Endothelial cell of umbilical vein (primary cell): ENCODE measurements at regions of chr17 and their contacts with region 1.

Region 1: DNA sequence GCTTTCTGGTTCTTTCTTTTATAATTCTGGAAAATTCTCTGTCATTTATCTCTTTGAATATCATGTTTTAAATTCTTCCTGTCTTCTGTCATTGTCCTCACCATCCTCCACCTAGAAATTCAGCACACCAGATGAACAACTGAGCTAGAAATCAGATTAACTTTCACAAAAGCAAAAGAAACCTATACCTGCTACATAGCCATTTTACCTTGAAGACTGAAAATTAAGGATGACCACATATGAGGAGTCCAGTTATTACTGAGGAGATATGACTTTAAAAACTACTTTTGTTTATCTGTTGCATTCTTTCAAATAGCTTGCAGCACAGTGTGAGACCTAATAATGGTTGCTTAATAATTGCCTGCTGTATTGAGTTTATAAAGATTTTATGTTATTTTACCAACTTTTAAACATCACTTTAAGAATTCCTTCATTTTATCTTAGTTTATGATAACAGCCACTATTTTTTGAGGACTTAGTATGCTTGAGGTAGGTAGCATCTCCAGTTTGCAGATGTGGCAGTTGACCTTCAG is 104.3 kb downstream of the BCAS3 start:
- DNase-seq: no peak
- H3K4me3 ChIP-seq: no peak overlapping the region
- H3K27ac ChIP-seq: no peak overlapping the region
- H3K4me1 ChIP-seq: no peaks in the 10 kb centered on the region
- H3K27me3 ChIP-seq: no peaks in the 10 kb centered on the region
- CTCF ChIP-seq: no peak
- POLR2A ChIP-seq: no peak

Region 2: GRCh38 chr17:60817192-60817591 is 35.2 kb after region 1 on chr17:
- CTCF ChIA-PET with region 1: no interaction called
- POLR2A ChIA-PET with region 1: no interaction called
- dilution Hi-C with region 1: no loop called
- intact Hi-C with region 1: no loop called
- DNase-seq: no peak
- H3K4me3 ChIP-seq: no peak overlapping the region
- H3K27ac ChIP-seq: no peak overlapping the region
- H3K4me1 ChIP-seq: no peaks in the 10 kb centered on the region
- H3K27me3 ChIP-seq: no peaks in the 10 kb centered on the region
- CTCF ChIP-seq: no peak
- POLR2A ChIP-seq: no peak

Region 3: DNA sequence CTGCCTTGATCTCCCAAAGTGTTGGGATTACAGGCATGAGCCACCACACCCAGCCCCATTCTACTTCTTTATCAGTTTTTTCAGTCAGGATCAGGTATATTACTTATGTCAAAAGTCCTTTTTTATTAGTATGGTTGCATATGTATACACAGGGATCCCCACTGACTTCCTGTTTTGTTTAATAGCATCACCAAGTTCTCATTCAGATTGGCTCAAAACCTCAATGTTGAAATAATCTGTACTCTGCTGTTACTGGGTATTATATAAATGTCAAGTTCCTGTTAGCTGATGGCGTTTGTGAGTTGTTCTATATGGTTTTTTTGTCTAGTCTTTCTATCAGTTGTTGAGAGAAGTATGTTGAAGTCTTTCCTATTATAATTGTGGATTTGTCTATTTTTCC is 64.2 kb after region 1 on chr17:
- CTCF ChIA-PET with region 1: no interaction called
- POLR2A ChIA-PET with region 1: no interaction called
- dilution Hi-C with region 1: no loop called
- intact Hi-C with region 1: loop called (anchors 10 kb)
- DNase-seq: no peak
- H3K4me3 ChIP-seq: no peak overlapping the region
- H3K27ac ChIP-seq: no peak overlapping the region
- H3K4me1 ChIP-seq: no peaks in the 10 kb centered on the region
- H3K27me3 ChIP-seq: no peaks in the 10 kb centered on the region
- CTCF ChIP-seq: no peak
- POLR2A ChIP-seq: no peak